MCF 10A (cell line): ENCODE measurements at regions of chr15 and their contacts with region 1.

Region 1: DNA sequence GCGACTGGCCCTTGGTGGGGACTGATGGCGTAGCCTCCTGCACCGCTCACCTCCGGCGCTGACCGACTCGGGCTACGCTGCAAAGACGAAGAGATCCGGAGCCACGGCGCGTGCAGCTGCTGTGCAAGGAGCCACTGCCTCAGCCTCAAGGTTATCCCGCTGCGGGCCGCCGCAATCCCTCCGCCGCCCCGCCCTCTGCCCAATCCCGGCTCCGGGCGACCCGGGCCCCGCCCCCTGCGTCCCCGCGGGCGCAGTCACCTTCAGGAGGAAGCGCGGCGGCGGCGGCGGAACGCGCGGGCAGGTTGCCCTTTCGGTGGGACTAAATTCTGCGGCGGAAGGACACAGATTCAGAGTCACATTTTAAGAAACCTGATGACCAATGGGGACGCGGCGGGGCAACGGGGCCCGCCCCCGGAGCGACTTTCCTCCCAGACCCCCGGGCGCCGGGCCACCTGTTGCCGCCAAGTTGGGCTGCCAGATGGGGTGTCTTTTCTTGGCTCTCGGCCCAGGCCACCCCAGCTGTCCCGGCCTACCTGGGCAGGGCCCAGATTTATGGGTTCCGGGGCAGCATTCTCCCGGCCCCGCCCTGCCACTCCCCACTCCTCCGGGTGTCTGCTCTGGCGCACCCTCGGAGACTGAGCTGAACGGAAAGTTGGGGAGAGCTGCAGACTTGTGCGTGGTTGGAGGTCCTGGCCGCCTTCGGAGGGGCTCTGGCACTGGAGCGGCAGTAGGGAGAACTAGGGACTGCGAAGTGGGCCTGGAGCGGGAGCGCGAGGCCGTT is at the start of gene PKM:
- DNase-seq: peak; percentile 98
- H3K4me3 Mint-ChIP-seq: peak within 1 kb of the TSS; percentile 89
- H3K27ac Mint-ChIP-seq: peak within 1 kb of the TSS; percentile 81
- H3K4me1 Mint-ChIP-seq: peaks cover 24% of the 10 kb centered on the region
- H3K27me3 Mint-ChIP-seq: no peaks in the 10 kb centered on the region
- CTCF ChIP-seq: no peak
- total RNA-seq, gene PKM: 612 and 828 TPM in 2 replicates

Region 2: GRCh38 chr15:72124218-72124617 is 107.0 kb before region 1 on chr15:
- CTCF ChIA-PET with region 1: no interaction called
- POLR2A ChIA-PET with region 1: no interaction called
- intact Hi-C with region 1: no loop called
- DNase-seq: no peak
- H3K4me3 Mint-ChIP-seq: no peak overlapping the region
- H3K27ac Mint-ChIP-seq: no peak overlapping the region
- H3K4me1 Mint-ChIP-seq: peaks cover 11% of the 10 kb centered on the region
- H3K27me3 Mint-ChIP-seq: no peaks in the 10 kb centered on the region
- CTCF ChIP-seq: no peak

Region 3: GRCh38 chr15:72184165-72184889 is 46.9 kb before region 1 on chr15:
- CTCF ChIA-PET with region 1: no interaction called
- POLR2A ChIA-PET with region 1: interaction called, 15 read pairs
- intact Hi-C with region 1: no loop called
- DNase-seq: peak; percentile 65
- H3K4me3 Mint-ChIP-seq: peak overlapping the region; percentile 38
- H3K27ac Mint-ChIP-seq: no peak overlapping the region
- H3K4me1 Mint-ChIP-seq: peaks cover 26% of the 10 kb centered on the region
- H3K27me3 Mint-ChIP-seq: no peaks in the 10 kb centered on the region
- CTCF ChIP-seq: no peak

Region 4: GRCh38 chr15:72206677-72207000 is 24.6 kb before region 1 on chr15:
- CTCF ChIA-PET with region 1: interaction called, 29 read pairs
- POLR2A ChIA-PET with region 1: interaction called, 424 read pairs
- intact Hi-C with region 1: loop called (anchors 1 kb)
- DNase-seq: no peak
- H3K4me3 Mint-ChIP-seq: no peak overlapping the region
- H3K27ac Mint-ChIP-seq: no peak overlapping the region
- H3K4me1 Mint-ChIP-seq: peaks cover 23% of the 10 kb centered on the region
- H3K27me3 Mint-ChIP-seq: no peaks in the 10 kb centered on the region
- CTCF ChIP-seq: no peak

Region 5: GRCh38 chr15:72265031-72265430 is 33.8 kb after region 1 on chr15:
- CTCF ChIA-PET with region 1: interaction called, 4 read pairs
- POLR2A ChIA-PET with region 1: interaction called, 15 read pairs
- intact Hi-C with region 1: no loop called
- DNase-seq: no peak
- H3K4me3 Mint-ChIP-seq: no peak overlapping the region
- H3K27ac Mint-ChIP-seq: no peak overlapping the region
- H3K4me1 Mint-ChIP-seq: peaks cover 6% of the 10 kb centered on the region
- H3K27me3 Mint-ChIP-seq: no peaks in the 10 kb centered on the region
- CTCF ChIP-seq: no peak

Region 6: DNA sequence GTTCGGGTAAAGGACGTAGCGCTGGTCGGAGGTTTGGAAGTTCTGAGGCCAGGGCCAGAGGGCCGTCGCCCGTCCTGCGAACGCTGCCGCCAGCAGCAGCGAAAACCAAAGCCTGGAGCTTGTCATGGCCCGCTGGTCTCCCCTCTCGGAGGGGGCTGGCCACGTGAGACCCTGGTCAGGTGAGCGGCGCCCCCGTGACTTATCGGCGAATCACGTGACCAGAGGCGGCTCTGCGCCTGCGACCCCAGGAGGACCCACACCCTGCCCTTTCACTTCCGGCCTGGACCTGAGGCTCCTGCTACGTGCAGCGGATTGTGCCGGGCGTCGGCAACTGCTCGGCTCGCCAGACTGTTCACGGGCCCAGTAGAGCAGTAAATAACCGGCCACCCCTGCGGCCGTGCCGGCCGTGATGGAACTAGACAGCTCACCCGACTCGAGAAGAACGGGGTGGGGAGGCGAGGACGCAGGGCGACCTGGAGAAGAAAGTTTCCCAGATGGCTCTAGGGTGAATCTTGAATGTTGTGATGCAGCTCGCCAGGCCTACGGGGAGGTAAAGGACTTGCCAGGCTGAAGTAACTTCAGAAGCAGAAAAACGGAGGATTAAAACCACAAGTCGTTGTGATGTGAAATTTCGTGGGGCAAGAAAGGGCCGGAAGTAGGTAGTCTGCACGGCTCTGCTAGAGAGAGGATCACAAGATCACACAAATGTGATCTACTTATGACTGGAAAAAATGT is 144.8 kb after region 1 on chr15 and contains the start of gene HEXA:
- CTCF ChIA-PET with region 1: no interaction called
- POLR2A ChIA-PET with region 1: interaction called, 16 read pairs
- intact Hi-C with region 1: no loop called
- DNase-seq: peak; percentile 93
- H3K4me3 Mint-ChIP-seq: peak within 1 kb of the TSS; percentile 92
- H3K27ac Mint-ChIP-seq: peak within 1 kb of the TSS; percentile 95
- H3K4me1 Mint-ChIP-seq: peaks cover 18% of the 10 kb centered on the region
- H3K27me3 Mint-ChIP-seq: no peaks in the 10 kb centered on the region
- CTCF ChIP-seq: no peak
- total RNA-seq, gene HEXA: 87.5 and 110 TPM in 2 replicates